ENCODE measurements at regions of chr11 and their contacts with region 1.

Region 1: DNA sequence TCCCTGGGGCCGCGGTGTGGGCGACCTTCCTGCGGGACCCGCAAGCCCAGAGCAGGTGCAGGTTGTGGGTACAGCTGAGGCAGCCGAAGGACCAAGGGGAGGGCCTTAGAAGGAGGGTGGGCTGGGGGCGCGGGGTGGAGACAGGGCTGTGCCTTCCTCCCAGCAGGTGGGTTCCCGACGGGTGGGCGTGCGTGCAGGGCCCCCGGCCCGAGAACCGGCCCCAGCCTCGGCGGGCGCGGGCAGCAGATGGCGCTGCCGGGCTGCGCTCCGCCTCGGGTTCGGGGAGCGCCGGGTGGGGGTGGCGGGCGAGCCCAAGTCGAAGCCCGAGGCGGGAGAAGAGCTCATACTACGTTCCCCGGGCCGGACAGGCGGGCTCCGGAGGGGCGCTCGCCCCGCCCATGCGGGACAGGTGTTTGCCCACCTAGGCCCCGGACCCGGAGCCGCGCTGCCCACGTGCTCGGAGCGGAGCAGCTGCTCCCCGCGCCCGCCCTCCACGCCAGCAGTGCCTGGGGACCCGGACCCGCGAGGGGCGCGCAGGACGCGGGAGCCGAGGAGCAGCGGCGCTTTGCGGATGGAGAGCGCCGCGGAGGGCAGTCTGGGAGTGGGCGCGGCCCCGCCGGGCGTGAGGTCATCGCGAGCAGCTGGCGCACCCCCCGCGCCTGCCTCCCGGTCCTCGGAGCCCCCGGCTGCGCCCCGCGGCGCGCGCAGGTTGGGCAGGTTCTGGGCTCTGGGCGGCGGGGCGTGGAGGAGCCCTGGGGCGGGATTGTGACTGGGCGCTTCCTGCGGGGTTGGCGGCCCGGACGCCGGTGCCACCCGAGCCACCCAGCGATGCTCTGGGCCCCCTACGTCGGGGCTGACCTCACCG is 25.3 kb downstream of the DUSP8 start:
- DNase-seq: peak; percentile 28
- H3K4me3 ChIP-seq: no peak overlapping the region
- H3K27ac ChIP-seq: no peak overlapping the region
- H3K4me1 ChIP-seq: peaks cover 2% of the 10 kb centered on the region
- H3K27me3 ChIP-seq: peaks cover 13 to 28% of the 10 kb centered on the region in 2 experiments
- CTCF ChIP-seq: peak; percentile 62 to 70
- POLR2A ChIP-seq: no peak

Region 2: GRCh38 chr11:1060824-1061616 is 485.7 kb before region 1 on chr11:
- CTCF ChIA-PET with region 1: no interaction called
- POLR2A ChIA-PET with region 1: no interaction called
- dilution Hi-C with region 1: no loop called
- intact Hi-C with region 1: no loop called
- DNase-seq: peak; percentile 36
- H3K4me3 ChIP-seq: no peak overlapping the region
- H3K27ac ChIP-seq: no peak overlapping the region
- H3K4me1 ChIP-seq: no peaks in the 10 kb centered on the region
- H3K27me3 ChIP-seq: peaks cover 5 to 7% of the 10 kb centered on the region in 2 experiments
- CTCF ChIP-seq: no peak
- POLR2A ChIP-seq: no peak

Region 3: DNA sequence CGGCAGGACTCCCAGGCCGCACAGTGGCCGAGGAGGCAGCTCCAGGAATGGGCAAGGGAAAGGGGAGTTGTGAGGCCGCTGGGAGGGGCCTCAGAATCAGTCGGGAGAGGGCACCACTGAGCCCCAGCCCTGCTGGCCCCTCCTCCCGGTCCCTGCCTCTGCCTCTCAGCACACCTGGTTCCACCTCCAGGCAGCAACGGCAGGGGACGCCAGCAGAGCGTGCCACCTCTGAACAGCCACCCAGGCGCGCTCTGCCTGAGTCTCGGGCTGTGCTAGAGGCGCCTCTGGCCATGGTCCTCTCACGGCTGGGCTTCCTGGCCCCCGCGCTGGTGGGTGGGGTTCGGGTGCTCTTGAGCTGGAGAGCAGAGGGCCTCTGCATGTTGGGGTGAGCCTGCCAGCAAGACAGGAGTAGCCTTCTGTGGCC is 93.1 kb before region 1 on chr11:
- CTCF ChIA-PET with region 1: no interaction called
- POLR2A ChIA-PET with region 1: no interaction called
- dilution Hi-C with region 1: no loop called
- intact Hi-C with region 1: no loop called
- DNase-seq: no peak
- H3K4me3 ChIP-seq: no peak overlapping the region
- H3K27ac ChIP-seq: no peak overlapping the region
- H3K4me1 ChIP-seq: no peaks in the 10 kb centered on the region
- H3K27me3 ChIP-seq: no peaks in the 10 kb centered on the region
- CTCF ChIP-seq: peak in 1 of 2 donors; percentile 38
- POLR2A ChIP-seq: no peak

Region 4: DNA sequence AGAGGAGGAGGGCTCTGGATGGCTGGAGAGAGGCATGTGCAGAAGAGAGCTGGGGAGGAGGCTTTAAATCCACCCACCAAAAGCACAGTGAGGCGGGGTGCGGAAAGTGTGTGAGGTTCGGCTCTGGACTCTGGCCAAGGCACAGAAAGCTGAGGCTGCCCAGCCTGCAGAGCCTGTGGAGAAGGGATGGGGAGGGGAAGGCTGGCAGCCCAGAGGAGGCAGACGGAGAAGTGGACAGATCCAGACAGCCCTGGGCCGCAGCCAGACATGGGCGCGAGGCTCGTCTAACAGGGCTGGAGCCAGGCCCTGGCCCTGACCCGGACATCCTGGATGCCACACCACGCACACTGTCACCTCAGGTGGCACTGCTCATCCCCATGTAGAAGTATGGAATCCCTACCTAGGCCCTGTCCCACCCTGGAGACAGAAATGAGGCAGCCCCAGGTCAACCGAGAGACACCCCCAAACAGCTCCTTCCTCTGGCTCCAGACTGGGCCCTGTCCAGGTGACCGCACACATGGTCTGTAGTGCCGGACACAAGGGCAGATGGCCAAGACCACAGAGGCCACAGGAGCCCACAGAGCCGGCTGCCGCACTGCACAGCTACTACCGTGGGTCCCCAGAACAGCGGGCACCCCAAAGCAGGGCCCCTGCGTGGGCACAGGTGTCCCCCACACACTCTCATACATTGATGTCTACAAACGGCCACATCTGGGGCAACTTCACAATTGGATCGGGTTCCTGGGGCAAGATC is 43.6 kb before region 1 on chr11:
- CTCF ChIA-PET with region 1: no interaction called
- POLR2A ChIA-PET with region 1: no interaction called
- dilution Hi-C with region 1: no loop called
- intact Hi-C with region 1: no loop called
- DNase-seq: no peak
- H3K4me3 ChIP-seq: no peak overlapping the region
- H3K27ac ChIP-seq: no peak overlapping the region
- H3K4me1 ChIP-seq: no peaks in the 10 kb centered on the region
- H3K27me3 ChIP-seq: no peaks in the 10 kb centered on the region
- CTCF ChIP-seq: no peak
- POLR2A ChIP-seq: no peak

Region 5: GRCh38 chr11:1534682-1535081 is 12.1 kb before region 1 on chr11:
- CTCF ChIA-PET with region 1: interaction called, 10 read pairs
- POLR2A ChIA-PET with region 1: no interaction called
- dilution Hi-C with region 1: no loop called
- intact Hi-C with region 1: no loop called
- DNase-seq: no peak
- H3K4me3 ChIP-seq: no peak overlapping the region
- H3K27ac ChIP-seq: no peak overlapping the region
- H3K4me1 ChIP-seq: peaks cover 7% of the 10 kb centered on the region
- H3K27me3 ChIP-seq: peaks cover 7 to 8% of the 10 kb centered on the region in 2 experiments
- CTCF ChIP-seq: no peak
- POLR2A ChIP-seq: no peak

Region 6: GRCh38 chr11:1559119-1559951 is 12.6 kb after region 1 on chr11:
- CTCF ChIA-PET with region 1: interaction called, 24 read pairs
- POLR2A ChIA-PET with region 1: no interaction called
- dilution Hi-C with region 1: no loop called
- intact Hi-C with region 1: no loop called
- DNase-seq: no peak
- H3K4me3 ChIP-seq: no peak overlapping the region
- H3K27ac ChIP-seq: no peak overlapping the region
- H3K4me1 ChIP-seq: no peaks in the 10 kb centered on the region
- H3K27me3 ChIP-seq: no peaks in the 10 kb centered on the region
- CTCF ChIP-seq: no peak
- POLR2A ChIP-seq: no peak

Region 7: GRCh38 chr11:1564535-1565172 is 17.9 kb after region 1 on chr11:
- CTCF ChIA-PET with region 1: interaction called, 24 read pairs
- POLR2A ChIA-PET with region 1: no interaction called
- dilution Hi-C with region 1: no loop called
- intact Hi-C with region 1: no loop called
- DNase-seq: peak; percentile 57
- H3K4me3 ChIP-seq: no peak overlapping the region
- H3K27ac ChIP-seq: no peak overlapping the region
- H3K4me1 ChIP-seq: no peaks in the 10 kb centered on the region
- H3K27me3 ChIP-seq: no peaks in the 10 kb centered on the region
- CTCF ChIP-seq: no peak
- POLR2A ChIP-seq: no peak

Region 8: GRCh38 chr11:1592628-1593027 is 45.9 kb after region 1 on chr11:
- CTCF ChIA-PET with region 1: interaction called, 16 read pairs
- POLR2A ChIA-PET with region 1: no interaction called
- dilution Hi-C with region 1: no loop called
- intact Hi-C with region 1: no loop called
- DNase-seq: no peak
- H3K4me3 ChIP-seq: no peak overlapping the region
- H3K27ac ChIP-seq: no peak overlapping the region
- H3K4me1 ChIP-seq: peaks cover 7% of the 10 kb centered on the region
- H3K27me3 ChIP-seq: peaks cover 3 to 4% of the 10 kb centered on the region in 2 experiments
- CTCF ChIP-seq: no peak
- POLR2A ChIP-seq: no peak

Region 9: DNA sequence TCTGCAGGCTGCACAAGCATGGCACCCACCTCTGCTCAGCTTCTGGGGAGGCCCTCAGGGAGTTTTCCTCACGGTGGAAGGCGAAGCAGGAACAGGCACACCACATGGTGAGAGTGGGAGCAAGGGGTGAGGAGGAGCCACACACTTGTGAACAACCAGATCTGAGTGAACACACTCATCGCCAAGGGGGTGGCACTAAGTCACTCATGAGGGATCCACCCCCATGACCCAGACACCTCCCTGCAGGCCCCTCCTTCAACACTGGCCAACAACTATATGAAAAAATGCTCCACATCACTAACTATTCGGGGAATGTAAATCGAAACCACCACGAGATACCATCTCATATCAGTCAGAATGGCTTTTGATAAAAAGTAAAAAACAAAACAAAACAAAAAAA is 52.0 kb after region 1 on chr11:
- CTCF ChIA-PET with region 1: interaction called, 16 read pairs
- POLR2A ChIA-PET with region 1: no interaction called
- dilution Hi-C with region 1: no loop called
- intact Hi-C with region 1: no loop called
- DNase-seq: no peak
- H3K4me3 ChIP-seq: no peak overlapping the region
- H3K27ac ChIP-seq: no peak overlapping the region
- H3K4me1 ChIP-seq: no peaks in the 10 kb centered on the region
- H3K27me3 ChIP-seq: peaks cover 0 to 5% of the 10 kb centered on the region in 2 experiments
- CTCF ChIP-seq: no peak
- POLR2A ChIP-seq: no peak

Region 10: GRCh38 chr11:1628506-1629325 is 81.9 kb after region 1 on chr11:
- CTCF ChIA-PET with region 1: interaction called, 25 read pairs
- POLR2A ChIA-PET with region 1: no interaction called
- dilution Hi-C with region 1: no loop called
- intact Hi-C with region 1: loop called (anchors 1 kb)
- DNase-seq: peak; percentile 34
- H3K4me3 ChIP-seq: no peak overlapping the region
- H3K27ac ChIP-seq: no peak overlapping the region
- H3K4me1 ChIP-seq: no peaks in the 10 kb centered on the region
- H3K27me3 ChIP-seq: peaks cover 0 to 8% of the 10 kb centered on the region in 2 experiments
- CTCF ChIP-seq: peak; percentile 95 to 97
- POLR2A ChIP-seq: no peak